Esophagus squamous epithelium (tissue), 5 donors: ENCODE measurements at regions of chr14 and their contacts with region 1.

Region 1: DNA sequence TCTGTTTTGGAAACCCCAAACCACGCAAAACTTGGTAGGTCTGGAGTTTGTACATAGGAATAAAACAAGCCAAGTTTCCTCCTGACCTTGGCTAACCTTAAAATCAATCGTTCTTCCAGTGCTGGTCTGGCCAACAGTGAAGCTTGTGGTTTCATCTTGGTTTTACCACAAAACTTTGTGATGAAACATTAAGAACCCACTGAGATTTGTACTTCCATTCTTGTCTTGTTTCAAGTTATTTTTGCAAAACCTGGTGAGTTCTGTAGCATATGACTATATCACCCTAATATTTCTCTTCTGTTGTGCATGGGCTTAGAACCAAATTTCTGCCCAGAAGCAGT is 26.4 kb downstream of the SIX1 start:
- DNase-seq: no peak
- H3K4me3 ChIP-seq: no peak overlapping the region
- H3K27ac ChIP-seq: no peak overlapping the region
- H3K4me1 ChIP-seq: peaks cover 0 to 7% (median 0%) of the 10 kb centered on the region in 3 donors
- H3K27me3 ChIP-seq: peaks cover 0 to 19% (median 0%) of the 10 kb centered on the region in 4 donors
- CTCF ChIP-seq: no peak
- POLR2A ChIP-seq: no peak

Region 2: DNA sequence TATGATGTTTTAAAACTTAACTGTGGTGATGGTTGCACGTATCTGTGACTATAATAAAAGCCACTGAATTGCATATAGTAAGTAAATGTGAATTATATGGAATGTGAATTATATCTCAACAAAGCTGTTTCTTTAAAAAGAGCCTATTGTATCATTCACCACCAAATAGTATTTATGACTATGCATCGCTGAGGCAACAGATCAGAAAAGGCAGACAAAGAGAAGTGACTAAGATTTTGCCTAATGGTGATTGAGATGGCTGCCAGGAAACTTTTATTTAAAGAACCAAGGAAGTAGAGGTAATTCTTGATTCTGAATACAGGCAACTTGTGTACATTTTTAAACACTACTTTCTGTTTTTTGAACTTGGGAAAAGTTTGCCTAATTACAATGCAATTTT is 489.4 kb before region 1 on chr14:
- intact Hi-C with region 1: no loop called
- DNase-seq: no peak
- H3K4me3 ChIP-seq: no peak overlapping the region
- H3K27ac ChIP-seq: no peak overlapping the region
- H3K4me1 ChIP-seq: no peaks in the 10 kb centered on the region
- H3K27me3 ChIP-seq: no peaks in the 10 kb centered on the region
- CTCF ChIP-seq: no peak
- POLR2A ChIP-seq: no peak

Region 3: DNA sequence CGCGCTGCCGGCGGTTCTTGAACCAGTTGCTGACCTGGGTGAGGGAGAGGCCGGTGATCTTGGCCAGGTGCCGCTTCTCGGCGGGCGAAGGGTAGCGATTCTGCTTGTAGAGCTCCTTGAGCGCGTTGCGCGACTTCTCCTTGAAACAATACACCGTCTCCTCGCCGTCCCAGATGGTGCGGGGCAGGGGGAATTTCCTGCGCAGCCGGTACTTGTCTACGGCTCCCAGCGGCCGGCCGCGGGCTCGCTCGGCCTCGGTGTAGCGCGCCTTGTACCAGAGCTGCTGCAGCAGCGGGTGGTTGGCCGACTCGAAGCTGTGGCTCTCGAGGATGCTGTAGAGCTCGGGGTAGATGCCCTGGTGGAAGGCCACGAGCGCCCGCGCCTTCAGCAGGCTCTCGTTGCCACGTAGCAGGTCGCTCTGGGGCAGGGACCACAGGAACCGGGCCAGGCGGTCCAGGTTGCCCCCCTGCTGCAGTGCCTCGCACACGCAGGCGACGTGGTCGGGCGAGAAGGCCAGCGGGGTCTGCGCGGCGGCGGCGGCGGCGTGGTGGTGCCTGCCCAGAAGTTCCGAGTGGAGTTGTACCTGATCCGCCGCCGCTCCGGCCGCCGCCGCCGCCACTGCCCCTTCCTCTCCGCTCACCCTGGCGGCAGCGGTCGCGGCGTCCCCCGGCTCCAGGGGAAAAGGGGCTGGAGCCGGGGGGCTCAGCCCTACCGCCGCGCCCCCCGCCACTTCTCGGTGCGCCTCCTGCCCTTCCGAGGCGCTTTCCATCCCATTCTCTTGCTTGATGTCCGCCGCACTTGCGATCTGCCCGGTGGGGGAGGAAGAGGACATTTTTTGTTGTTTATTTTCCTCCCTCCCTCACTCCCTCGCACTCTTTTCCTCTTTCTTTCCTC is 100.6 kb after region 1 on chr14:
- intact Hi-C with region 1: no loop called
- DNase-seq: no peak
- H3K4me3 ChIP-seq: peak overlapping the region; percentile 56 to 78 (median 64)
- H3K27ac ChIP-seq: peak overlapping the region; percentile 23 to 62 (median 38)
- H3K4me1 ChIP-seq: peaks cover 3 to 38% (median 11%) of the 10 kb centered on the region in 3 donors
- H3K27me3 ChIP-seq: peaks cover 0 to 100% (median 0%) of the 10 kb centered on the region in 4 donors
- CTCF ChIP-seq: no peak
- POLR2A ChIP-seq: no peak

Region 4: DNA sequence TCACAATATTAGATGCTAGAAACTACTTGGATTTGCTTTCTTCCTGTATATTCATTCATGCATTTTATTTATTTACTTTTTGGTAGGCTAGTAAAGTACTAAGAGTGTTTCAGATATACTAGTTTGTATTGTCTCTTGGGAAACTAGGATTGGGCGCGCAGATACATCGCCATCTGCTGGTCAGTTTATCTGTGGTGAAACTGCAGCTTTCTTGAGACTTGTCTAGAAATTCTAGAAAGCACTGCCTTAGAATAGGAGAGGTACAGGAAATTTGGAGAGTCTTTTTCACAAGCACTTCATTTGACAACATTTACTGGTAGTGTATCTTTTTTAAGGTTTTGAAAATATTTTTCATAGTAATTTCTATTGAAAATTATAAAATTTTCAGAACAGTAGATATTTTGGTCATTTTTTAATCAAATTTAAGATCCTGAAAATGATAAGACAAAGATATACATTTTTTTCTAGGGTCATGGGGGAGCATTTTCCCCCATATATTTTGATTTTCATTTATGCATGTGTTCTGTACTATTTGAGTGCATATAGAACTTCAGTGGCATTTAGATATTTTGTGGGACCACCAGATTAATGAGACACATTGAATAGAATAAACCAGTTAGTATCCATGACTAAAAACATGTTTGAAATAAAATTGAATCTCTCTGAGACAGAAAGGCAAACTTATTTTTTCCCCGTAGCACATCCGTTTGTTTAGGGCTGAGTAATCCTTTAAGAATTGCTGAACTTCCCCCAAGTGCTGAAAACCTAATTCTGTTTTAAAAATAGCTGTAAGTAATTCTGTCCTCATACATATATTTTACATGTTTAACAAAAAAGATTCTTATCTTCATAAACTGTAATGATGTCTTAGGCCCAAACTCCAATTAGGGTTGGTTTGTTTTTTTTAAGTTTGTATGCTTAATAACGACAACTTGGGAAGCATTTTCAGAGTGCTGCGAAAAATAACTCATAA is 402.6 kb after region 1 on chr14:
- intact Hi-C with region 1: loop called (anchors 10 kb)
- DNase-seq: no peak
- H3K4me3 ChIP-seq: no peak overlapping the region
- H3K27ac ChIP-seq: no peak overlapping the region
- H3K4me1 ChIP-seq: no peaks in the 10 kb centered on the region
- H3K27me3 ChIP-seq: no peaks in the 10 kb centered on the region
- CTCF ChIP-seq: peak; percentile 69 to 91 (median 82)
- POLR2A ChIP-seq: no peak

Region 5: GRCh38 chr14:61252369-61253063 is 629.6 kb after region 1 on chr14:
- intact Hi-C with region 1: loop called (anchors 5 kb)
- DNase-seq: peak; percentile 11
- H3K4me3 ChIP-seq: no peak overlapping the region
- H3K27ac ChIP-seq: no peak overlapping the region
- H3K4me1 ChIP-seq: peaks cover 0 to 5% (median 0%) of the 10 kb centered on the region in 3 donors
- H3K27me3 ChIP-seq: peaks cover 0 to 3% (median 0%) of the 10 kb centered on the region in 4 donors
- CTCF ChIP-seq: peak; percentile 44 to 83 (median 75)
- POLR2A ChIP-seq: no peak